ENCODE measurements at regions of chr9 and their contacts with region 1.

Region 1: DNA sequence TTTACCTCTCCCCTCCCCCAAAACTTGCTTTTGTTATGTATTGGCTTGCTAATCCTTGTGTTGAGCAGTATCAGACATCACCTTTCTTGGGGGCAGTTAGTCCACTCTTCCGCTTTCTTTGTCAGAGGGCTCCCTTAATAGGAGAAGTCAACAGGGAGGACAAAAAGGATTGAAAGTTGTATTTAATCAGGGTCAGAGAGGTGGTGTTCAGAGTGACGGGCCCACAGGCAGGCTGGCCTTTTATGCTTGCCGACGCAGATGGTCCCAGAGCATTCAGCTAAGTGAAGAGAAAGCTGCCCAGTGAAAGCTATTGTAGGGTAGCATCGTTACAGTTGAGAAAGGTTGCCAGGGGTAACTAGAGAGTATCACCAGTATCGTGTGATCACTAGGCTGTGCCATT is 131.1 kb downstream of the ZCCHC7 start:
- DNase-seq: no peak
- ATAC-seq: no peak

Region 2: GRCh38 chr9:37010180-37010579 is 241.3 kb before region 1 on chr9:
- intact Hi-C with region 1: loop called (anchors 5 kb)
- DNase-seq: no peak
- ATAC-seq: no peak